Activated CD4-positive, alpha-beta memory T cell treated with anti-CD3 and anti-CD28 coated beads for 36 hours (primary cell): ENCODE measurements at regions of chr1 and their contacts with region 1.

Region 1: DNA sequence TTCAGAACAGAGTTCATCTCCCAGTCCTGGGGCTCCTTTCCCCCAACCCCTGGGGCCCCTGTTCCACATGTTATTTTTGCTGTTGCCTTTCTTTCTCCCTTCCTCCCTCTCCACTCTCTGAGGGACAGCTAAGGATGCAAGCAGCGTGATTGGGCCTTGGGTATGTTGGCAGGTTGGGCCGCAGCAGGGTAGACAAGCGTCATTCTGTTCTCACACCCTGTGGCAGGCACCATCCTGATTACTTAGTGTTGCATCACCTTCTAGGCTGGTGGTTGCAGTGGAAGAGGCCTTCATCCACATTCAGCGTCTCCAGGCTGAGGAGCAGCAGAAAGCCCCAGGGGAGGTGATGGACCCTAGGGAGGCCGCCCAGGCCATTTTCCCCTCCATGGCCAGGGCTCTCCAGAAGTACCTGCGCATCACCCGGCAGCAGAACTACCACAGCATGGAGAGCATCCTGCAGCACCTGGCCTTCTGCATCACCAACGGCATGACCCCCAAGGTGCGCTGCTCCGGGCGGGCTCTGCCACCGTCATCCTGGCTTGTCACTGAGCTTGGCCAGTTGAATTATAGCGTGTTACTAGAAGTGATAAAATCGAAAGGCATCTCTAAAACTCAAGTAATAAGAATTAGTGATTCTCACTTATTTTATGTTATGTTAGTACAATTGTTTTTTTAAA is 43.4 kb downstream of the VANGL1 start:
- DNase-seq: no peak
- H3K4me3 Mint-ChIP-seq: no peak overlapping the region
- H3K27ac Mint-ChIP-seq: no peak overlapping the region
- H3K4me1 Mint-ChIP-seq: no peaks in the 10 kb centered on the region
- H3K27me3 Mint-ChIP-seq: no peaks in the 10 kb centered on the region

Region 2: GRCh38 chr1:115515270-115515669 is 169.9 kb before region 1 on chr1:
- CTCF ChIA-PET with region 1: no interaction called
- POLR2A ChIA-PET with region 1: no interaction called
- intact Hi-C with region 1: no loop called
- DNase-seq: no peak
- H3K4me3 Mint-ChIP-seq: no peak overlapping the region
- H3K27ac Mint-ChIP-seq: no peak overlapping the region
- H3K4me1 Mint-ChIP-seq: no peaks in the 10 kb centered on the region
- H3K27me3 Mint-ChIP-seq: peaks cover 11% of the 10 kb centered on the region

Region 3: GRCh38 chr1:115630342-115630741 is 54.8 kb before region 1 on chr1:
- CTCF ChIA-PET with region 1: no interaction called
- POLR2A ChIA-PET with region 1: no interaction called
- intact Hi-C with region 1: loop called (anchors 10 kb)
- DNase-seq: no peak
- H3K4me3 Mint-ChIP-seq: no peak overlapping the region
- H3K27ac Mint-ChIP-seq: no peak overlapping the region
- H3K4me1 Mint-ChIP-seq: no peaks in the 10 kb centered on the region
- H3K27me3 Mint-ChIP-seq: peaks cover 13% of the 10 kb centered on the region